Caco-2 (cell line): ENCODE measurements at regions of chr20 and their contacts with region 1.

Region 1: DNA sequence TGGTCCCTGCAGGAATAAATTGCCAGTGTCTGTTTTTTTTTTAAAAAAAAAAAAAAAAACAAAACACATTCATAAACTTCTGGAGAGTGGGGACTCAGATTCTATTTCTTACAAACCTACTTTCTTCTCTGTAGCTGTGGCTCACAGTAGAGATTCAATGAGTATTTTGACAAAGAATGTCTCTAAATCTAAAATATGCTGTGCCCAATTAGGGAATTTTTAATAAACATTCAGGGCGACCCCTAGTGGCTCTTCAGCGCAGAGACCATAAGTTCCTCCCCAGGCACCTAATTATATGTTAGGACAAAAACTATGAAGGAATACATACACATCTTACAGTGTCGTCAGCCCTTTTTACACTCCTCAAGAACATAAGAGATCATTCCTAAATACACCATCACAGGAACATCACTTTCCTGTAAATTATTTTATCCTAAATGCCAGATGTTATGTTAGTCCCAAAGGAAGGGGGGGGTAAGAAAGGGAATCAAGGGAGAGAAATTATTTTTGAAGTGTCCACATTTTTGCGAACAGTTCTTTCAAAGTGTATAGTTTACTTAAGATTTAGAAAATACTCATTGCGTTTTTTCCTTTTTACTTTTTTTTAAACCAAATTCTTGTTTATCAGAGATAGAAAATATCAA is 21.8 kb upstream of the NAA20 start:
- DNase-seq: peak in 1 of 2 experiments; percentile 37
- H3K4me3 ChIP-seq: no peak overlapping the region
- H3K4me3 Mint-ChIP-seq: no peak overlapping the region
- H3K27ac Mint-ChIP-seq: peak overlapping the region; percentile 81
- H3K4me1 ChIP-seq: peaks cover 44% of the 10 kb centered on the region
- H3K4me1 Mint-ChIP-seq: peaks cover 32% of the 10 kb centered on the region
- H3K27me3 ChIP-seq: no peaks in the 10 kb centered on the region
- H3K27me3 Mint-ChIP-seq: no peaks in the 10 kb centered on the region
- CTCF ChIP-seq: peak; percentile 79 to 86

Region 2: DNA sequence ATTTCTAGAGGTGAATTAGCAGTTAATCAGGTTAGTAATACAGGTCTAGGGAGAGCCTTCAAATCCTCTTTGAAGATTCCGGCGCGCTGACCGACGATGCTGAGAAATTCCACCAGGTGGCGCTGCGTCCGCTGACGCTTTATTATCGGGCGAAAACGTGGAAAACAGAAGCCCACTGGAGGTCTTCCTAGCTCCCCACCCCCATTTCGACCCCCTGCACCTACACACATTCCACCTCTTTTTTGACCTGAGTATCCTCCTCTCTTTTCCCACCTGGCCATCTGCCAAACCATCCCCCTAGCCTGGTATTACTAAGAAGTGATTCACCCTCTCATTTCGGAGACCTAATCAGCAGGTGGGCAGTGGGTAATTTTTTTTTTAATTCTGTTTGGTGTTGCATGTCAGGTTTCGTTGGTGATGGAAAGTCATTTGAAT is 302.6 kb before region 1 on chr20:
- CTCF ChIA-PET with region 1: no interaction called
- POLR2A ChIA-PET with region 1: no interaction called
- intact Hi-C with region 1: loop called (anchors 2 kb)
- DNase-seq: peak; percentile 55 to 73
- H3K4me3 ChIP-seq: no peak overlapping the region
- H3K4me3 Mint-ChIP-seq: peak overlapping the region; percentile 27
- H3K27ac Mint-ChIP-seq: no peak overlapping the region
- H3K4me1 ChIP-seq: 0 out of 2 replicates have a peak, but pooled peaks cover 8% of the 10 kb centered on the region
- H3K4me1 Mint-ChIP-seq: peaks cover 15% of the 10 kb centered on the region
- H3K27me3 ChIP-seq: no peaks in the 10 kb centered on the region
- H3K27me3 Mint-ChIP-seq: no peaks in the 10 kb centered on the region
- CTCF ChIP-seq: peak; percentile 90

Region 3: GRCh38 chr20:19807191-19807945 is 188.0 kb before region 1 on chr20:
- CTCF ChIA-PET with region 1: no interaction called
- POLR2A ChIA-PET with region 1: no interaction called
- intact Hi-C with region 1: no loop called
- DNase-seq: no peak
- H3K4me3 ChIP-seq: no peak overlapping the region
- H3K4me3 Mint-ChIP-seq: no peak overlapping the region
- H3K27ac Mint-ChIP-seq: no peak overlapping the region
- H3K4me1 ChIP-seq: peaks cover 13% of the 10 kb centered on the region
- H3K4me1 Mint-ChIP-seq: peaks cover 17% of the 10 kb centered on the region
- H3K27me3 ChIP-seq: no peaks in the 10 kb centered on the region
- H3K27me3 Mint-ChIP-seq: no peaks in the 10 kb centered on the region
- CTCF ChIP-seq: no peak

Region 4: GRCh38 chr20:19828232-19828631 is 167.1 kb before region 1 on chr20:
- CTCF ChIA-PET with region 1: interaction called, 3 read pairs
- POLR2A ChIA-PET with region 1: no interaction called
- intact Hi-C with region 1: loop called (anchors 1 kb)
- DNase-seq: no peak
- H3K4me3 ChIP-seq: no peak overlapping the region
- H3K4me3 Mint-ChIP-seq: peak overlapping the region; percentile 25
- H3K27ac Mint-ChIP-seq: peak overlapping the region; percentile 60
- H3K4me1 ChIP-seq: peaks cover 20% of the 10 kb centered on the region
- H3K4me1 Mint-ChIP-seq: peaks cover 13% of the 10 kb centered on the region
- H3K27me3 ChIP-seq: no peaks in the 10 kb centered on the region
- H3K27me3 Mint-ChIP-seq: no peaks in the 10 kb centered on the region
- CTCF ChIP-seq: peak in 1 of 2 experiments; percentile 51

Region 5: GRCh38 chr20:19964289-19965263 is 30.8 kb before region 1 on chr20:
- CTCF ChIA-PET with region 1: no interaction called
- POLR2A ChIA-PET with region 1: no interaction called
- intact Hi-C with region 1: loop called (anchors 1 kb)
- DNase-seq: peak; percentile 82 to 88
- H3K4me3 ChIP-seq: no peak overlapping the region
- H3K4me3 Mint-ChIP-seq: peak overlapping the region; percentile 57
- H3K27ac Mint-ChIP-seq: peak overlapping the region; percentile 88
- H3K4me1 ChIP-seq: peaks cover 37% of the 10 kb centered on the region
- H3K4me1 Mint-ChIP-seq: peaks cover 32% of the 10 kb centered on the region
- H3K27me3 ChIP-seq: no peaks in the 10 kb centered on the region
- H3K27me3 Mint-ChIP-seq: no peaks in the 10 kb centered on the region
- CTCF ChIP-seq: no peak

Region 6: GRCh38 chr20:20017001-20017843 is 21.9 kb after region 1 on chr20 and contains the start of gene NAA20:
- CTCF ChIA-PET with region 1: interaction called, 3 read pairs
- POLR2A ChIA-PET with region 1: no interaction called
- intact Hi-C with region 1: loop called (anchors 1 kb)
- DNase-seq: peak; percentile 97
- H3K4me3 ChIP-seq: peak within 1 kb of the TSS; percentile 83
- H3K4me3 Mint-ChIP-seq: peak within 1 kb of the TSS; percentile 90
- H3K27ac Mint-ChIP-seq: peak within 1 kb of the TSS; percentile 94
- H3K4me1 ChIP-seq: peaks cover 21% of the 10 kb centered on the region
- H3K4me1 Mint-ChIP-seq: peaks cover 14% of the 10 kb centered on the region
- H3K27me3 ChIP-seq: no peaks in the 10 kb centered on the region
- H3K27me3 Mint-ChIP-seq: no peaks in the 10 kb centered on the region
- CTCF ChIP-seq: peak; percentile 60 to 88
- total RNA-seq, gene NAA20: 77.5 and 81.5 TPM in 2 replicates